Activated CD4-positive, alpha-beta memory T cell treated with anti-CD3 and anti-CD28 coated beads for 36 hours (primary cell): ENCODE measurements at regions of chr16 and their contacts with region 1.

Region 1: DNA sequence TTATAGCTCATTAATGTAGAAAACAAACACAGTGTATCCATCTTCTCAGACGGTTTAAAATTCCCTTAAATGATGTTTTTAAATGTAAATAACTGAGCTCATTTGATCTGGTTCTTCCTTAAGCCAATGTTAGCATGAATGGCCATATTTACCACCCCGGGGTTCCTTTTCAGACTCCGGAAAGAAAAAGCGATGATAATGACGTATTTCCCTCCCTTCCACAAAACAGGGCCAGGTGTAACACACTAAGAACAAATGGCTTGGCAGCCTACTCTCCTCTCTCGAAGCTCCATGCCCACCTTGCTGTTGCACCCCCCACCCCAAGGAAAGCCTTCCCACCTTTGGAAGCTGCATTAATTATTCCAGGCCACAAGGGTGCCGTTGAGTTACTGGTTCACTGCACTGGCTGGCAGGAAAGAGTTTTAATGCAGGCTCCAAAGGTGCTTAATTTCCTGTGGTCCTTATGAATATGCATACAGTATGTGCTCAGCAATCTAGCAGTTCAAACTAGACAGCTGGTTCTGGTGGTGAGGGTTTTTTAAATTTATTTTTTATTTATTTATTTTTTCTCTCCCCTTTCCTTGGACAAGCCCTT is 378.9 kb downstream of the WWOX start:
- DNase-seq: peak; percentile 31
- H3K4me3 Mint-ChIP-seq: no peak overlapping the region
- H3K27ac Mint-ChIP-seq: no peak overlapping the region
- H3K4me1 Mint-ChIP-seq: no peaks in the 10 kb centered on the region
- H3K27me3 Mint-ChIP-seq: no peaks in the 10 kb centered on the region

Region 2: GRCh38 chr16:78489072-78489471 is 10.7 kb after region 1 on chr16:
- CTCF ChIA-PET with region 1: interaction called, 16 read pairs
- POLR2A ChIA-PET with region 1: no interaction called
- intact Hi-C with region 1: no loop called
- DNase-seq: no peak
- H3K4me3 Mint-ChIP-seq: no peak overlapping the region
- H3K27ac Mint-ChIP-seq: no peak overlapping the region
- H3K4me1 Mint-ChIP-seq: no peaks in the 10 kb centered on the region
- H3K27me3 Mint-ChIP-seq: no peaks in the 10 kb centered on the region

Region 3: GRCh38 chr16:78664811-78665772 is 186.7 kb after region 1 on chr16:
- CTCF ChIA-PET with region 1: no interaction called
- POLR2A ChIA-PET with region 1: no interaction called
- intact Hi-C with region 1: no loop called
- DNase-seq: no peak
- H3K4me3 Mint-ChIP-seq: no peak overlapping the region
- H3K27ac Mint-ChIP-seq: no peak overlapping the region
- H3K4me1 Mint-ChIP-seq: no peaks in the 10 kb centered on the region
- H3K27me3 Mint-ChIP-seq: no peaks in the 10 kb centered on the region